Naive thymus-derived CD4-positive, alpha-beta T cell (primary cell): ENCODE measurements at regions of chr5 and their contacts with region 1.

Region 1: GRCh38 chr5:131382407-131383395 is 118.8 kb downstream of the CDC42SE2 start:
- DNase-seq: peak in 8 of 9 donors; percentile 43 to 88 (median 82)
- ATAC-seq: peak; percentile 81
- H3K4me3 ChIP-seq: no peak overlapping the region
- H3K4me3 Mint-ChIP-seq: peak overlapping the region; percentile 40 to 86 (median 72)
- H3K27ac ChIP-seq: peak overlapping the region; percentile 97
- H3K27ac Mint-ChIP-seq: peak overlapping the region; percentile 94 to 99 (median 98)
- H3K4me1 ChIP-seq: peaks cover 74 to 76% of the 10 kb centered on the region in 2 donors
- H3K4me1 Mint-ChIP-seq: peaks cover 41 to 100% (median 92%) of the 10 kb centered on the region in 7 donors
- H3K27me3 ChIP-seq: no peaks in the 10 kb centered on the region
- H3K27me3 Mint-ChIP-seq: no peaks in the 10 kb centered on the region

Region 2: GRCh38 chr5:130710596-130710995 is 672.1 kb before region 1 on chr5:
- CTCF ChIA-PET with region 1: no interaction called
- POLR2A ChIA-PET with region 1: no interaction called
- intact Hi-C with region 1: no loop called
- DNase-seq: no peak
- ATAC-seq: no peak
- H3K4me3 ChIP-seq: no peak overlapping the region
- H3K4me3 Mint-ChIP-seq: no peak overlapping the region
- H3K27ac ChIP-seq: no peak overlapping the region
- H3K27ac Mint-ChIP-seq: no peak overlapping the region
- H3K4me1 ChIP-seq: no peaks in the 10 kb centered on the region
- H3K4me1 Mint-ChIP-seq: no peaks in the 10 kb centered on the region
- H3K27me3 ChIP-seq: no peaks in the 10 kb centered on the region
- H3K27me3 Mint-ChIP-seq: peaks cover 2 to 32% (median 22%) of the 10 kb centered on the region in 5 donors

Region 3: GRCh38 chr5:130871346-130872086 is 511.2 kb before region 1 on chr5:
- CTCF ChIA-PET with region 1: no interaction called
- POLR2A ChIA-PET with region 1: no interaction called
- intact Hi-C with region 1: loop called in 1 of 2 experiments (anchors 1 kb)
- DNase-seq: peak in 8 of 9 donors; percentile 6 to 61 (median 42)
- ATAC-seq: peak; percentile 75
- H3K4me3 ChIP-seq: no peak overlapping the region
- H3K4me3 Mint-ChIP-seq: no peak overlapping the region
- H3K27ac ChIP-seq: no peak overlapping the region
- H3K27ac Mint-ChIP-seq: no peak overlapping the region
- H3K4me1 ChIP-seq: no peaks in the 10 kb centered on the region
- H3K4me1 Mint-ChIP-seq: no peaks in the 10 kb centered on the region
- H3K27me3 ChIP-seq: no peaks in the 10 kb centered on the region
- H3K27me3 Mint-ChIP-seq: no peaks in the 10 kb centered on the region

Region 4: DNA sequence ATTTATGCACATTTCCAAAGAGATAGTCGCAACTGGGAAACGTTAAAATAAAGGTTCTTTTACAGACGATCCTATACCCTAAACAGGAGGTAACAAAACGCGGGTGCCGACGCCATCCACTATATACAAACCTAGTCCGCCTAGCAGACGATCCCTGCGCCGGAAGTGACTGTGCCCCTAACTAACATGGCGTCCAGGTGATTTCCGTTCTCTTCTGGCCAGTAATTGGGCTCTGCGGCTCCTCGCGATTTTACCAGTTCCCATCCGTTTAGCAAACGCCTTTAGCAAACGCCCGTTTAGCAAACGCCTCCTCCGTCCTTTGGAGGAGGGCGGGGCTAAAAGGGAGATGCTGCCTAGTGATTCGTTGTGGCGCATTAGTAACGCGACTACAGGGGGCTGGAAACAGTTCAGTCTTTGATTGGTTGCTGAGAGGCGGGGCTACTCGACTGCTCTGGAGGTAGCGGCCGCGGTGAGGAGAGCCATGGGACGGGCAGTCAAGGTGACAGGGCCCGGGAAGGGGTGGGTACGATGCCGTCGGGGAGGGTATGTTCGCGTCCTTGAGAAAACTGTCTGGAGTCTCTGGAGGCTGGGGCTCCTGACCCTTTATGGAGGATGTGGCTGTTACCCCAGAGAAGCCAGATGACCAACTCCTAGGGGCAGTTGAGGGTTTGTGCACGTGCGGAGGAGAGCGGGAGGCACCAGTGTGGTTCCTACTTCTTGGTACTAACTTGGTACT is 212.0 kb before region 1 on chr5 and contains the start of gene LYRM7:
- CTCF ChIA-PET with region 1: interaction called, 10 read pairs
- POLR2A ChIA-PET with region 1: interaction called, 5 read pairs
- intact Hi-C with region 1: loop called (anchors 1 kb)
- DNase-seq: peak; percentile 70 to 99 (median 95)
- ATAC-seq: peak; percentile 98
- H3K4me3 ChIP-seq: peak within 1 kb of the TSS; percentile 74
- H3K4me3 Mint-ChIP-seq: peak within 1 kb of the TSS; percentile 95 to 100 (median 98)
- H3K27ac ChIP-seq: peak within 1 kb of the TSS; percentile 82
- H3K27ac Mint-ChIP-seq: peak within 1 kb of the TSS; percentile 92 to 98 (median 97)
- H3K4me1 ChIP-seq: peaks cover 11 to 16% of the 10 kb centered on the region in 2 donors
- H3K4me1 Mint-ChIP-seq: peaks cover 37 to 72% (median 63%) of the 10 kb centered on the region in 7 donors
- H3K27me3 ChIP-seq: no peaks in the 10 kb centered on the region
- H3K27me3 Mint-ChIP-seq: no peaks in the 10 kb centered on the region
- total RNA-seq, gene LYRM7: 8.2 to 18.8 (median 16.3) TPM

Region 5: GRCh38 chr5:131258733-131259132 is 124.0 kb before region 1 on chr5:
- CTCF ChIA-PET with region 1: interaction called, 8 read pairs
- POLR2A ChIA-PET with region 1: interaction called, 70 read pairs
- intact Hi-C with region 1: loop called in 1 of 2 experiments (anchors 1 kb)
- DNase-seq: no peak
- ATAC-seq: no peak
- H3K4me3 ChIP-seq: peak overlapping the region; percentile 20
- H3K4me3 Mint-ChIP-seq: peak overlapping the region; percentile 46 to 88 (median 80)
- H3K27ac ChIP-seq: peak overlapping the region; percentile 61
- H3K27ac Mint-ChIP-seq: peak overlapping the region; percentile 85 to 96 (median 93)
- H3K4me1 ChIP-seq: peaks cover 62 to 63% of the 10 kb centered on the region in 2 donors
- H3K4me1 Mint-ChIP-seq: peaks cover 52 to 91% (median 75%) of the 10 kb centered on the region in 7 donors
- H3K27me3 ChIP-seq: no peaks in the 10 kb centered on the region
- H3K27me3 Mint-ChIP-seq: no peaks in the 10 kb centered on the region

Region 6: DNA sequence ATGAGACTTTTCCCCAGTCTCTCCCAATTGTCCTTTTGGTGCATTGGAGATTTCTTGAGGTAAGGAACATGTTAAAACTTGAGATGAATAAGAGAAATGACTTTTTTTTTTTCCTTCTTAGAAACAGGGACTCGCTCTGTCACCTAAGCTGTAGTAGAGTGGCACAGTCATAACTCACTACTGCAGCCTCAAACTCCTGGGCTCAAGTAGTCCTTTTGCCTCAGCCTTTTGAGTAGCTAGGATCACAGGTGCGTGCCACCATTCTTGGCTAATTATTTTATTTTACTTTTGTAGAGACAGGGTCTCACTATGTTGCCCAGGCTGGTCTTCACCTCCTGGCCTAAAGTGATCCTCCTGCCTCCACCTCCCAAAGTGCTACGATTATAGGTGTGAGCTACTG is 93.0 kb before region 1 on chr5:
- CTCF ChIA-PET with region 1: interaction called, 7 read pairs
- POLR2A ChIA-PET with region 1: interaction called, 12 read pairs
- intact Hi-C with region 1: loop called in 1 of 2 experiments (anchors 2 kb)
- DNase-seq: peak in 1 of 9 donors; percentile 22
- ATAC-seq: peak; percentile 58
- H3K4me3 ChIP-seq: peak overlapping the region; percentile 55
- H3K4me3 Mint-ChIP-seq: peak overlapping the region; percentile 58 to 92 (median 86)
- H3K27ac ChIP-seq: peak overlapping the region; percentile 75
- H3K27ac Mint-ChIP-seq: peak overlapping the region; percentile 87 to 98 (median 94)
- H3K4me1 ChIP-seq: peaks cover 66 to 76% of the 10 kb centered on the region in 2 donors
- H3K4me1 Mint-ChIP-seq: peaks cover 40 to 94% (median 81%) of the 10 kb centered on the region in 7 donors
- H3K27me3 ChIP-seq: no peaks in the 10 kb centered on the region
- H3K27me3 Mint-ChIP-seq: no peaks in the 10 kb centered on the region

Region 7: GRCh38 chr5:131338051-131338453 is 44.6 kb before region 1 on chr5:
- CTCF ChIA-PET with region 1: no interaction called
- POLR2A ChIA-PET with region 1: interaction called, 3 read pairs
- intact Hi-C with region 1: loop called in 1 of 2 experiments (anchors 5 kb)
- DNase-seq: no peak
- ATAC-seq: no peak
- H3K4me3 ChIP-seq: no peak overlapping the region
- H3K4me3 Mint-ChIP-seq: peak overlapping the region in 7 of 10 donors; percentile 15 to 72 (median 37)
- H3K27ac ChIP-seq: no peak overlapping the region
- H3K27ac Mint-ChIP-seq: peak overlapping the region in 8 of 9 donors; percentile 8 to 58 (median 50)
- H3K4me1 ChIP-seq: peaks cover 2 to 40% of the 10 kb centered on the region in 2 donors
- H3K4me1 Mint-ChIP-seq: peaks cover 36 to 92% (median 73%) of the 10 kb centered on the region in 7 donors
- H3K27me3 ChIP-seq: no peaks in the 10 kb centered on the region
- H3K27me3 Mint-ChIP-seq: no peaks in the 10 kb centered on the region

Region 8: DNA sequence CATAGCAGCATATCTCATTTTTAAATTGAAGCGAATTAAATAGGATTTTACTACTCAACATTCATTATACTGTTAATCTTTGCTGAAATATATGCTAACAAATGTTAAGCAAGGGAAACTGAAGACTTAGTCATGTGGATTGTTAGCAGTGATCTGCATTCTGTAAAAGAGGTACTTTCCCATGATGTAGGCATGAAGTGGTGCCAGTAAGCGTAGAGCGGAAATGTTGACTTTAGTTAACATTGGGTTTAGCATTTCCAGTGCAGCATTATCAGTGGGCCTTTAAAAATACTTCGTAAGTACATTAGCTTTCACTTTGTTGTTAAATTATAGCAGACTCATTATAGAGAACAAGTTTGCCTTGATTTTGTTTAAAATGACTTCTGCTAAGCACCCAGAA is 11.4 kb after region 1 on chr5:
- CTCF ChIA-PET with region 1: interaction called, 5 read pairs
- POLR2A ChIA-PET with region 1: interaction called, 10 read pairs
- intact Hi-C with region 1: loop called (anchors 1 kb)
- DNase-seq: peak in 8 of 9 donors; percentile 36 to 84 (median 77)
- ATAC-seq: peak; percentile 97
- H3K4me3 ChIP-seq: no peak overlapping the region
- H3K4me3 Mint-ChIP-seq: peak overlapping the region in 9 of 10 donors; percentile 30 to 85 (median 69)
- H3K27ac ChIP-seq: peak overlapping the region; percentile 84
- H3K27ac Mint-ChIP-seq: peak overlapping the region; percentile 88 to 97 (median 91)
- H3K4me1 ChIP-seq: peaks cover 59 to 61% of the 10 kb centered on the region in 2 donors
- H3K4me1 Mint-ChIP-seq: peaks cover 28 to 95% (median 84%) of the 10 kb centered on the region in 7 donors
- H3K27me3 ChIP-seq: no peaks in the 10 kb centered on the region
- H3K27me3 Mint-ChIP-seq: no peaks in the 10 kb centered on the region

Region 9: DNA sequence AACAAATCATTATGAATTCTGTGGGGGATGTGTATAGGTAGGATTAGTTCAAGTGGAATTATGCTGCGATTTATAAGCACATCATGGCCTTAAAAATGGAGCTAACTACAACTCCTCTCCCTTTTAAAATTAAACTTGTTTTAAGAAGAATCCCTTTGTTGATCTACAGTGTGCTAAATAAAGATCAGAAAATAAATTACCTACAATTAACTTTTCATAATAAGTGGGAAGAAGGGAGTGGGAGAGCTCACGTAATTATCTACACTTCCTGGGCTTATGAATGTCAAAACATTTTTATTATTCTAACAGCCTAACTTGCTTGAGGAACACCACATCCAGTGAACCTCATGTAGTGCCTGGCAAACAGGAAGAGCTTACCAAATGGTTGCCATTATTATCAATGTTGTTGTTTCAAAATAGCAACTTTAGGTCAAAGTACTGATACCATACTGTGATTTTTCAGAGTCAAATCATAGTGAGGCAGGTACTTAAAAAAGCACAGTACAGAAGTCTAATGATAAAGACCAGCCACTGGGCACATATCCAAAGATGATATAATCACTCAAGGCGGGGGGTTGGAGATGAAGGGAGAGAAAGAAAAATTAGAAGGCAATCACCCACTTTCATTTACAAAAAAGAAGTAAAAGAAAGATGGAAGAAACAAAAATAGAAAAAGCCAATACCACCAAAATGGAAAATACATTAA is 78.3 kb after region 1 on chr5:
- CTCF ChIA-PET with region 1: no interaction called
- POLR2A ChIA-PET with region 1: no interaction called
- intact Hi-C with region 1: no loop called
- DNase-seq: no peak
- ATAC-seq: no peak
- H3K4me3 ChIP-seq: no peak overlapping the region
- H3K4me3 Mint-ChIP-seq: peak overlapping the region in 8 of 10 donors; percentile 24 to 75 (median 58)
- H3K27ac ChIP-seq: no peak overlapping the region
- H3K27ac Mint-ChIP-seq: peak overlapping the region in 8 of 9 donors; percentile 51 to 93 (median 77)
- H3K4me1 ChIP-seq: peaks cover 0 to 16% of the 10 kb centered on the region in 2 donors
- H3K4me1 Mint-ChIP-seq: peaks cover 11 to 89% (median 70%) of the 10 kb centered on the region in 7 donors
- H3K27me3 ChIP-seq: no peaks in the 10 kb centered on the region
- H3K27me3 Mint-ChIP-seq: no peaks in the 10 kb centered on the region

Region 10: GRCh38 chr5:131709043-131709442 is 326.3 kb after region 1 on chr5:
- CTCF ChIA-PET with region 1: no interaction called
- POLR2A ChIA-PET with region 1: no interaction called
- intact Hi-C with region 1: no loop called
- DNase-seq: no peak
- ATAC-seq: no peak
- H3K4me3 ChIP-seq: no peak overlapping the region
- H3K4me3 Mint-ChIP-seq: no peak overlapping the region
- H3K27ac ChIP-seq: no peak overlapping the region
- H3K27ac Mint-ChIP-seq: no peak overlapping the region
- H3K4me1 ChIP-seq: no peaks in the 10 kb centered on the region
- H3K4me1 Mint-ChIP-seq: peaks cover 2 to 23% (median 10%) of the 10 kb centered on the region in 7 donors
- H3K27me3 ChIP-seq: no peaks in the 10 kb centered on the region
- H3K27me3 Mint-ChIP-seq: no peaks in the 10 kb centered on the region